PC-3 (cell line): ENCODE measurements at regions of chr10 and their contacts with region 1.

Region 1: DNA sequence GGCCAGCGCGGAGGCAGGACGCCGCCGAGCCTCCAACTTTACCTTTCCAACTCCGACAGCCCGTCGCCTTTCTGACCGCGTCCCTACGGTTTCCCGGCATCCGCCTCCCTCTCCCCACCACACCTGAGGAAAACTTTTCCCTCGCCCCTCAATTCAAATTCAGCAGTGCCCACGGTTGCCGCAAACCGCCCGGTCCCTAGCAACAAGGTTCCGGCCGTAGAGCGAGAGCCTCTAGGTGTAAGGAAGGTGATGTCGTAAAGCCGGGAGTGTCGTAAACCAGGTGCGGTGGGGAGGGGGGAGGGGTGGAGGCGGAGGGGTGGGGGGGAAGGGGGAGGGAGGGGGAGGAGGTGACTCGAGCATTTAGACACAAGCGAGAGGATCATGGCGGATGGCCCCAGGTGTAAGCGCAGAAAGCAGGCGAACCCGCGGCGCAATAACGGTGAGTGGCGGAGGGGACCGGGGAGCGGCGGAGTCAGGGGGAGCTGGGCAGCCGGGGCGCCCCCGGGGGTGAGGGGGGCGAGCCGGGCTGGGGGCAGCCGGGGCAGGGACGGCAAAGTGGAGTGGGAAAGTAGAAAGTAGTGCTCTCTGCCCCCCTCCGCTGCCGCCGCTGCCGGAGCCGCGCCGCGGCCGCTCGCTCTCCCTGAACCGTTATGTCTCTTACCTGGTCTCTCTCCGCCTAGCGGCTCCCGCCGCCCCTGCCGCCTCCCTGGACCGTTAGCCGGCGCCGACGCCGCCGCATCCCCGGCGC is at the start of gene ZEB1:
- DNase-seq: peak; percentile 78
- ATAC-seq: peak; percentile 50
- H3K4me3 ChIP-seq: peak within 1 kb of the TSS; percentile 96
- H3K27ac ChIP-seq: peak within 1 kb of the TSS; percentile 94
- H3K4me1 ChIP-seq: peaks cover 34% of the 10 kb centered on the region
- H3K27me3 ChIP-seq: no peaks in the 10 kb centered on the region
- CTCF ChIP-seq: no peak
- total RNA-seq, gene ZEB1: 3.9 and 10.7 TPM in 2 replicates

Region 2: DNA sequence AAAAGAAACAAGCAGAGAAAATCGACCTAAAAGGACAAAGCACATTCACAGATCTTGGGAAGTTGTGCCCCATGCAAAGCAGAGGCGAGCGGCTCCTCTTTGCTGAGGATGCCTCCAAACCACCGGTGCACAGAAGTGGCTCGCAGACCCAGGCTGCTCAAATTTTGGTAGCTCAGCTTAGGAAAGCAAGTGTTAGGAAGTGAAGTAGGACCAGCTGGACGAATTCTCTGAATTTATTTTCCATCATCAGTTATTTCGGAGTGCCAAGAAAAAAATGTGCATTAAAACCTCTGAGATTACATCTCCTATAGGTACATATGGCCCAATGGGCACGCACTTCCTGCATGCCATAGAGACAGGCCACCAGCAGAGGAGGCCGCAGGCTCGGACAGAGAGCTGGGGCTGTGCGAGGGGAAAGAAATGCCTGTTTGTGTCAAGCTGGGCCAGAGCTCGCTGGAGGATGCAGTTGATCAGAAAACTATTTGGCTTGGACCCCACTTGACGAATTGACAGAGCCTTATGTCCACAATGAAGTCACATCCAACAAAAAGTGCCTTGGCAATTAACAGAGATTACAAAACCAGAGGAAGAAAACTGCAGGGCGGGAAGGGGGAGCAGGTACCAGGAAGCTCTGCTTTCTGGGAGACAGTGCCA is 567.2 kb before region 1 on chr10:
- CTCF ChIA-PET with region 1: no interaction called
- POLR2A ChIA-PET with region 1: interaction called, 3 read pairs
- intact Hi-C with region 1: loop called (anchors 5 kb)
- DNase-seq: peak; percentile 78
- ATAC-seq: peak; percentile 94
- H3K4me3 ChIP-seq: no peak overlapping the region
- H3K27ac ChIP-seq: no peak overlapping the region
- H3K4me1 ChIP-seq: no peaks in the 10 kb centered on the region
- H3K27me3 ChIP-seq: no peaks in the 10 kb centered on the region
- CTCF ChIP-seq: peak; percentile 91

Region 3: GRCh38 chr10:31083765-31084184 is 235.3 kb before region 1 on chr10:
- CTCF ChIA-PET with region 1: no interaction called
- POLR2A ChIA-PET with region 1: interaction called, 3 read pairs
- intact Hi-C with region 1: loop called (anchors 5 kb)
- DNase-seq: peak; percentile 74
- ATAC-seq: peak; percentile 20; the same call in 1 of the 2 replicates
- H3K4me3 ChIP-seq: no peak overlapping the region
- H3K27ac ChIP-seq: no peak overlapping the region
- H3K4me1 ChIP-seq: no peaks in the 10 kb centered on the region
- H3K27me3 ChIP-seq: no peaks in the 10 kb centered on the region
- CTCF ChIP-seq: peak; percentile 65

Region 4: GRCh38 chr10:31404640-31405039 is 85.6 kb after region 1 on chr10:
- CTCF ChIA-PET with region 1: no interaction called
- POLR2A ChIA-PET with region 1: no interaction called
- intact Hi-C with region 1: loop called (anchors 5 kb)
- DNase-seq: no peak
- ATAC-seq: no peak
- H3K4me3 ChIP-seq: no peak overlapping the region
- H3K27ac ChIP-seq: no peak overlapping the region
- H3K4me1 ChIP-seq: peaks cover 24% of the 10 kb centered on the region
- H3K27me3 ChIP-seq: no peaks in the 10 kb centered on the region
- CTCF ChIP-seq: no peak

Region 5: DNA sequence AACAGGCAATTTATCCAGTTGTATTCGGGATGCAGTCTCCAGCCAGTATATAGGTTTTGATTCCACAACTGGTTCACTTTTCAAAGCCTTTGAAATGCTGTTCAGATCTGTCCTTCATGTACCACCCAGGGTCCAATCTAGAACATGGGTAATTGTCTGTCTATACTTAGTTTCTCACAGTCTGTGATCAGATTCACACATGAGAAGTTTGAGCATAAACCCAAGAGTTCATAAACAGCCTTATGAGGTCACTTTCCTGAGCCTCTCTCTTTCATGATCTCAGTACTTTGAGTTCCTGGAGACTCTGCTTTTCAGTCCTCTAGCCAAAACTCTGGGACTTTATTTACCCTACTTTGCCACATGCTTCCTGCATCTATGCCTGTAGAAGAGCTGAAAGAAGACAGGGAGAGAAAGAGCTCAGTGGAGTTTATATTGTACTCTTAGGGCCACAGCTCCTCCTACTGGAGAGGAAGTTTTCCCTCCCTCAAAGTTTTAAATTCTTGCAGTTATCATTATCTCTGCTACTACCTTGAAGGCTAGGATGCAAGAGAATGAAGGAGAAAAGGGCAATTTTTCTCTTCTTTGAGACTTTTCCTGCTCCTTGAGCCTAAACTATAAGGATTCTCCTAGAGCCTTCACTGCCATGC is 172.0 kb after region 1 on chr10:
- CTCF ChIA-PET with region 1: no interaction called
- POLR2A ChIA-PET with region 1: no interaction called
- intact Hi-C with region 1: loop called (anchors 2 kb)
- DNase-seq: peak; percentile 67
- ATAC-seq: 0 out of 2 replicates have a peak, but pooled peaks have one; percentile 46
- H3K4me3 ChIP-seq: no peak overlapping the region
- H3K27ac ChIP-seq: no peak overlapping the region
- H3K4me1 ChIP-seq: no peaks in the 10 kb centered on the region
- H3K27me3 ChIP-seq: no peaks in the 10 kb centered on the region
- CTCF ChIP-seq: peak; percentile 73